ENCODE measurements at regions of chr10 and their contacts with region 1.

Region 1: GRCh38 chr10:100998991-100999741 is 442 bp upstream of the LZTS2 start:
- DNase-seq: no peak
- H3K4me3 ChIP-seq: peak overlapping the region; percentile 71
- H3K27me3 ChIP-seq: no peaks in the 10 kb centered on the region
- CTCF ChIP-seq: peak; percentile 67

Region 2: GRCh38 chr10:100986952-100987750 is 12.0 kb before region 1 on chr10 and contains the starts of genes MRPL43 and TWNK:
- CTCF ChIA-PET with region 1: interaction called, 15 read pairs
- POLR2A ChIA-PET with region 1: no interaction called
- DNase-seq: no peak
- H3K4me3 ChIP-seq: peak within 1 kb of the TSS; percentile 95
- H3K27me3 ChIP-seq: no peaks in the 10 kb centered on the region
- CTCF ChIP-seq: no peak
- polyA plus RNA-seq, gene MRPL43: 77.3 and 123 TPM in 2 replicates
- polyA plus RNA-seq, gene TWNK: 4.7 and 5.5 TPM in 2 replicates

Region 3: GRCh38 chr10:101050208-101051069 is 51.3 kb after region 1 on chr10:
- CTCF ChIA-PET with region 1: interaction called, 10 read pairs
- POLR2A ChIA-PET with region 1: no interaction called
- DNase-seq: no peak
- H3K4me3 ChIP-seq: peak overlapping the region; percentile 18
- H3K27me3 ChIP-seq: peaks cover 12% of the 10 kb centered on the region
- CTCF ChIP-seq: peak; percentile 88

Region 4: DNA sequence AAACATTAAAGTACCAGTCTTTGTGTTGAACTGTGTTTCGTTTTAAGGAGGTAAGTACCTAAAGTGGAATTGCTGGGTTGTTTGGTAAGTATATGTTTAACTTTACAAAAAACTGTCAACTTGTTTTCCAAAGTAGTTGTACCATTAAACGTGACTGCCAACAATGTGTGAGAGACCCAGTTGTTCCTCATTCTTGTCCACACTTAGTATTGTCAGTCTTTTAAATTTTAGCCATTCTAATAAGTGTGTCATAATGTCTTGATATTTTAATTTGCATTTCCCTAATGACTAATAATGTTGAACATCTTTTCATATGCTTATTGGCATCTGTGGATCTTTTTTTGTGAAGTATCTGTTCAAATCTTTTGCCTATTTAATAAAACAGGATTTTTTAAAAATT is 514.6 kb after region 1 on chr10:
- CTCF ChIA-PET with region 1: no interaction called
- POLR2A ChIA-PET with region 1: no interaction called
- DNase-seq: no peak
- H3K4me3 ChIP-seq: no peak overlapping the region
- H3K27me3 ChIP-seq: no peaks in the 10 kb centered on the region
- CTCF ChIP-seq: no peak